Transverse colon (tissue), 4 donors: ENCODE measurements at regions of chr1 and their contacts with region 1.

Region 1: DNA sequence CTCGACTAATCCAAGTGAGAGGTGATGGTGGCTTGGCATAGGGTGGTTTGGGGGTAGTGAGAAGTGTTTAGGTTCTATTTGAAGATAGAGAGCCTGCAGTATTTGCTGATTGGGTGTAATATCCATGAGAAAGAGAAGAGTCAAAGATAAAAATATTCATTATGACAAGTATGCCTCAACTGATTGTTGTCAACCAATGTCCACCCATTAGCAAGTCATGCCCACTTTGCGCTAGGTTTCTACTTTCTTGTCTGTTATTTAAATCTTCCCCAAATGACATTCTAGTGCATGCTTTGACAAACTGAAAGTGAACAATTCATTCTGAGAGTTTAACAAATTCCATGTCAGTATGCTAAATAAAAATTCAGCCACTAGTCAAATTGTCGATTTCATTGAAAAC is 3.8 kb upstream of the XCL1 start:
- DNase-seq: no peak
- H3K4me3 ChIP-seq: no peak overlapping the region
- H3K27ac ChIP-seq: no peak overlapping the region
- H3K4me1 ChIP-seq: no peaks in the 10 kb centered on the region
- H3K27me3 ChIP-seq: no peaks in the 10 kb centered on the region
- CTCF ChIP-seq: no peak
- EP300 ChIP-seq: no peak
- POLR2A ChIP-seq: no peak

Region 2: GRCh38 chr1:168428063-168428731 is 144.4 kb before region 1 on chr1:
- in situ Hi-C with region 1: loop called in 2 of 4 experiments (anchors 10 to 25 kb)
- intact Hi-C with region 1: no loop called
- DNase-seq: no peak
- H3K4me3 ChIP-seq: no peak overlapping the region
- H3K27ac ChIP-seq: peak overlapping the region in 3 of 4 donors; percentile 55 to 76 (median 64)
- H3K4me1 ChIP-seq: peaks cover 0 to 17% (median 2%) of the 10 kb centered on the region in 4 donors
- H3K27me3 ChIP-seq: no peaks in the 10 kb centered on the region
- CTCF ChIP-seq: no peak
- EP300 ChIP-seq: no peak
- POLR2A ChIP-seq: no peak

Region 3: DNA sequence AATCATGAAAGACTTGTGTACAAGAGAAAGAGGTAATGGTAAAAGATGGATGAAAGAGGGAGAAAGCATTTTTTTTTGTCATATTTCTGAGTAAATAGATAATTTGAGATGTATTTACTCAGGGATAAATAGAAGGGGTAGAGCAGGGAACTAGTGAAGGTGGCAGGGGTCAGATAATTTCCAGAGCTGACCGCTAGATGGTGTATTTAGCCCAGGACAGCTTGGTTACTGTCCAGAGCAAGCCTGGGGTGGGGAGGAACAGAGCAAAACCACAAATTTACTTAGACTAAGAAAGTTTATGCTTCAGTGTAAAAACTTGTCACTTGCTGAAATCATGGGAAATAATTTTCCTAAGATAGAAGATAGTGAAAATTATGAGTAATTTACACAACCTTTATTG is 120.3 kb before region 1 on chr1:
- in situ Hi-C with region 1: loop called in 3 of 4 experiments (anchors 5 to 25 kb)
- intact Hi-C with region 1: loop called (anchors 10 kb)
- DNase-seq: no peak
- H3K4me3 ChIP-seq: no peak overlapping the region
- H3K27ac ChIP-seq: no peak overlapping the region
- H3K4me1 ChIP-seq: peaks cover 0 to 8% (median 0%) of the 10 kb centered on the region in 4 donors
- H3K27me3 ChIP-seq: no peaks in the 10 kb centered on the region
- CTCF ChIP-seq: no peak
- EP300 ChIP-seq: no peak
- POLR2A ChIP-seq: no peak

Region 4: DNA sequence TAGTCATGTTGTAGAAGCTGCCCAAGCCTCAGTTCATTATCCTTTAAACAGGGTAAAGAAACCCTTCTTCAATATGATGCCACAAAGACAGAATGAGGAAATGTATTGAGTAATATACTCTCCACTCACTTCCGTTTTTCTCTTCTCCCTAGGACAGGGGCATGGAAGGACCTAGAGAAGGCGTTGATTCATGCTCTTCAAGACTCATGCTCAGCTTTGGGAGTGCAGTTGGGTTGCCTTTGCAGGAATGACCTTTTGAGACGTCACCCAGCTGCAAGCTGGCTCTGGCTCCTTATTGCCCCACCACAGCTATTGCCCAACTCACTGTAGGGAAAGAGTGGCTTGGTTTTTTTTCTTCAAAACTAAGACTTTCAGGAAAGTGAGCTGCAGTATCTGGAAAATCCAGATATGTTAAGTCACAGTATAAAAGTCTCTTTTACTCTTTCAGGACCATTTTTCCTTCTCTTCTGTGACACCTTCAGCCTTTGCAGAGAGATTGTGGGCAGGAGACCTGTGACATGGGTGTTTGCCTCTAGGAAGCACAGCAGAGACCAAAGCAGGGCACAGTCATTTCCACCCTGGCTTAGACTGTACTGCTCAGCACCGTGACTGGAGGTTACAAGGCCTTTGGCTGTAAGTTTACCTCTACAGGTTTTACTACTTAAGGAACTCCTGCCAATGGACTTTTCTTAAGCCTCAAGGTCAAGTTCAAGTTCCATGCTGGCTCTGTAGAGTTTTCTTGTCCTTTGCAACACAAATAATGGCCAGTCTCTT is 68.4 kb before region 1 on chr1:
- in situ Hi-C with region 1: no loop called
- intact Hi-C with region 1: no loop called
- DNase-seq: peak; percentile 35
- H3K4me3 ChIP-seq: no peak overlapping the region
- H3K27ac ChIP-seq: peak overlapping the region in 1 of 4 donors; percentile 51
- H3K4me1 ChIP-seq: peaks cover 4 to 21% (median 12%) of the 10 kb centered on the region in 4 donors
- H3K27me3 ChIP-seq: no peaks in the 10 kb centered on the region
- CTCF ChIP-seq: no peak
- EP300 ChIP-seq: no peak
- POLR2A ChIP-seq: no peak